ENCODE measurements at regions of chr2 and their contacts with region 1.

Region 1: DNA sequence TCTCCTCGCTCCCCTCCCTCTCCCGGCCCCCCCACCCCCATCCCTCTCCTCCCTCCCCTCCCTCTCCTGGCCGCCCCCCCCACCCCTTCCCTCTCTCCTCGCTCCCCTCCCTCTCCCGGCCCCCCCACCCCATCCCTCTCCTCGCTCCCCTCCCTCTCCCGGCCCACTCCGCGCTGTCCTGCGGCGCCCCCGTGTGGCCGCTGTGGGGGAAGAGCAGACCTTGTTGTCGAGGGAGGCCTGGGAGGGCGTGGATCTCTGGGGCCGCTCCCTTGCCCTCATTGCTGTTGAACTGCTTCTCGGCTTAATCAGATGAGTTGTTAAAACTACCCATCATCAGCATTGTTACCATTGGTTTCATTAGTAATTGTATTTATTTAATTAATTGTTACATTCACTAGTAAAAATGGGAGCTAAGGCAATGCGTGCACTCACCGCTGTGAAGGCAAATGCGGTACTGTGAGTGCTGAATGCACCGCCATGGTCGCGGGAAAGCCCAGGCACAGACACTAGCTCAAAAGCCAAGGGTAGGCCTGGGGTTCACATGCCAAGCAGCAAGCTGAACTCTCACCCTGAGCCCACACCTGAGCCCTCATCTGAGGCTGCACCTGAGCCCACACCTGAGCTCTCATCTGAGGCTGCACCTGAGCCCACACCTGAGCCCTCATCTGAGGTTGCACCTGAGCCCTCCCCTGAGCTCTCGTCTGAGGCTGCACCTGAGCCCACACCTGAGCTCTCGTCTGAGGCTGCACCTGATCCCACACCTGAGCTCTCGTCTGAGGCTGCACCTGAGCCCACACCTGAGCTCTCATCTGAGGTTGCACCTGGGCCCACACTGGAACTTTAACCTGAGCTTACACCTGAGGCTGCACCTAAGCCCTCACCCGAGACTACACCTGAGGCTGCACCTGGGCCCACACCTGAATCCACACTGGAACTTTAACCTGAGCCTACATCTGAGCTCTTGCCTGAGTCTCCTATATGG is 8.8 kb downstream of the RTP5 start:
- DNase-seq: peak in 8 of 10 donors; percentile 53 to 84 (median 64)
- H3K4me3 ChIP-seq: peak overlapping the region in 4 of 59 donors; percentile 10 to 18 (median 16)
- H3K27ac ChIP-seq: no peak overlapping the region
- H3K27me3 ChIP-seq: no peaks in the 10 kb centered on the region
- CTCF ChIP-seq: peak; percentile 24 to 77 (median 66)

Region 2: DNA sequence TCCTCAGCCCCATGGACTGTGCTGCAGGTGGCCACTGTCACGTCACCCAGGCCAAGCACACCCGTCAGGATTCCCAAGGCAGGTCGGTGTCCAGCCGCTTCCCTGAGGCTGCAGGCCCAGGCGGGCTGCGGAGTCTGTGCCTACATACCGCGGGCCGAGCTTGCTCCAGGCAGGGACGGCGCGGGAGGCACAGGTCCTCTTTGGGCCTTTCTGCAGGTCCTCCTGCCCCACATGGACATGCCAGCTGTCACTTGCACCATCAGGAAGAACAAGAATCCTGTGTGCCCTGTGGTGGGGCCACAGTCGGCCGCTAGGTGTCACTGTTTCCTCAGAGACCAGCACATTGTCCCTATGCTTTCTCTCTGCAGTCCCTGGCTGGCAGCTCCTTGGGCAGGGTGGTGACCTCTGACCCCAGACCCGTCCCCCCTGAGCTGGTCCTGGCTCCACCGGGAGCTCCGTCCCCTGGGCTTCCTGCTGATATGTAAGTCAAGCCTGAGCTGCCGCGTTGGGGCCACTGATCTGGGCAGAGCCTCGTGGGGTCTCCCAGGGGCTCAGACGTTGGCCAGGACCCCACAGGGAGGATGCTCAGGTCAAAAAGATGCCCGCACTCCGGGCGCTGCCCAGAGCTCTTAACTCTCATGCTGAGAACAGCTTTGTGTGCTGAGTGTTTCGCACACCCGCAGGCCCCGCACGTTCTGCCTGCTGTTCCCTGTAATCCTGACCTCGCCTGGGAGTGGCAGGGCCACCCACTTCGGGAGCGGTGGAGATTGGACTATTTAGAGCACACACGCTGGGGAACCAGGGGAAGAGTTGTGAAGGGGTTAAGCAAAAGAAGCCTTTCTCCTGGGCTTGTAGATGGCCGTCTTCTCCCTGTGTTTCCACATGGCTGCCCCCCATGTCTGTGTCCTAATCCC is 1026.9 kb before region 1 on chr2:
- intact Hi-C with region 1: loop called in 1 of 2 experiments (anchors 10 kb)
- DNase-seq: peak; percentile 85 to 95 (median 91)
- H3K4me3 ChIP-seq: no peak overlapping the region
- H3K27ac ChIP-seq: peak overlapping the region in 1 of 59 donors; percentile 66
- H3K27me3 ChIP-seq: no peaks in the 10 kb centered on the region
- CTCF ChIP-seq: peak; percentile 83 to 99 (median 95)

Region 3: GRCh38 chr2:241666627-241667400 is 211.5 kb before region 1 on chr2:
- intact Hi-C with region 1: loop called in 1 of 2 experiments (anchors 10 kb)
- DNase-seq: no peak
- H3K4me3 ChIP-seq: peak overlapping the region in 1 of 59 donors; percentile 14
- H3K27ac ChIP-seq: peak overlapping the region in 50 of 59 donors; percentile 2 to 86 (median 63)
- H3K27me3 ChIP-seq: no peaks in the 10 kb centered on the region
- CTCF ChIP-seq: no peak

Region 4: DNA sequence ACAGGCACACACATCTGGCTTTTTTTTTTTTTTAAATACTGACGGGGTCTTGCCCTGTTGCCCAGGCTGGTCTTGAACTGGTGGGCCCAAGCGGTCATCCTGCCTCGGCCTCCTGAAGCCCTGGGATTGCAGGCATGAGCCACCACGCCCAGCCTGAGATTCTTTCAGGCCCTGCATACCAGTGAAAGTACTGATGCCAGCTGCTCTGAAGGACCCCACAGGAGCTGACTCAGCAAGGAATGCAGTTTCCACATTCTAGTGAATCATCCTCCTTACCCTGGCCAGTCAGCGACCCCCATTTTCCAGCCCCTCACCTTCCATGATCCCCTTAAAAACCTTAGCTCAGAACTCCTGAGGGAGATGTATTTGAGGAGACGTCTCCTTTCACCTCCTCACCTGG is 185.8 kb before region 1 on chr2:
- intact Hi-C with region 1: loop called in 1 of 2 experiments (anchors 10 kb)
- DNase-seq: no peak
- H3K4me3 ChIP-seq: no peak overlapping the region
- H3K27ac ChIP-seq: no peak overlapping the region
- H3K27me3 ChIP-seq: no peaks in the 10 kb centered on the region
- CTCF ChIP-seq: no peak